ENCODE measurements at regions of chr3 and their contacts with region 1.

Region 1: GRCh38 chr3:45665101-45665572 is 24.1 kb upstream of the SACM1L start:
- DNase-seq: peak; percentile 37
- H3K4me3 Mint-ChIP-seq: peak overlapping the region; percentile 76
- H3K27ac Mint-ChIP-seq: peak overlapping the region; percentile 88
- H3K4me1 Mint-ChIP-seq: peaks cover 47% of the 10 kb centered on the region
- H3K27me3 Mint-ChIP-seq: no peaks in the 10 kb centered on the region

Region 2: GRCh38 chr3:45688882-45689756 is 24.0 kb after region 1 on chr3 and contains the start of gene SACM1L:
- intact Hi-C with region 1: loop called (anchors 1 kb)
- DNase-seq: peak; percentile 97
- H3K4me3 Mint-ChIP-seq: peak within 1 kb of the TSS; percentile 93
- H3K27ac Mint-ChIP-seq: peak within 1 kb of the TSS; percentile 93
- H3K4me1 Mint-ChIP-seq: peaks cover 40% of the 10 kb centered on the region
- H3K27me3 Mint-ChIP-seq: peaks cover 2% of the 10 kb centered on the region
- total RNA-seq, gene SACM1L: 105 and 107 TPM in 2 replicates

Region 3: GRCh38 chr3:46065294-46065721 is 400.2 kb after region 1 on chr3:
- intact Hi-C with region 1: no loop called
- DNase-seq: peak; percentile 56
- H3K4me3 Mint-ChIP-seq: no peak overlapping the region
- H3K27ac Mint-ChIP-seq: peak overlapping the region; percentile 6
- H3K4me1 Mint-ChIP-seq: peaks cover 47% of the 10 kb centered on the region
- H3K27me3 Mint-ChIP-seq: peaks cover 52% of the 10 kb centered on the region